ENCODE measurements at regions of chr1 and their contacts with region 1.

Region 1: GRCh38 chr1:21255278-21255942 is 34.9 kb downstream of the ECE1 start:
- DNase-seq: peak; percentile 50
- H3K4me3 ChIP-seq: no peak overlapping the region
- H3K27ac ChIP-seq: no peak overlapping the region
- H3K27me3 ChIP-seq: no peaks in the 10 kb centered on the region
- CTCF ChIP-seq: peak; percentile 93

Region 2: DNA sequence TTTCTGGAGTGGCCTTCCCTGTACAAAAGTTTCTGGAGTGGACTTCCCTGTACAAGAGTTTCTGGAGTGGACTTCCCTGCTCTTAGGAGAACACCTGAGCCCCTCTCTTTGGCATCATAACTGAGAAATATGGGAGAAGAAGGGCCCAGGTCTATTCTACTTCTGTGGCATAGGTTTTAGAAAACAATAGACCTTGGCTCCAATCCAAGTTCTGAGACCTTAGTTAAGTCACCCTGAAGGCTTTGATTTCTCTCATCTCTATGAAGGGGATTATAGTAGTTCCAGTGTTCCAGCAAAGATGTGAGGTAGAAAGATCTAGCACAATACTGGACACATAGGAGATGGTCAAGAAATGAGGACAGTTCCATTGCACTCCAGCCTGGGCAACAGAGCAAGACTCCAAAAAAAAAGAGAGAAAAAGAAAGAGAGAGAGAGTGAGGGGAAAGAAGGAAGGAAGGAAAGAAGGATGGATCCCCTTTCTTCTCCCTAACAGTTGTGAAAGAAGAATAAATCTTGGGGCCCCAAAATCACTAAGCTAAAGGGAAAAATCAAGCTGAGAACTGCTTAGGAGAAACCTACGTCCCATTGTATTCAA is 65.4 kb before region 1 on chr1:
- CTCF ChIA-PET with region 1: no interaction called
- POLR2A ChIA-PET with region 1: no interaction called
- DNase-seq: no peak
- H3K4me3 ChIP-seq: no peak overlapping the region
- H3K27ac ChIP-seq: no peak overlapping the region
- H3K27me3 ChIP-seq: no peaks in the 10 kb centered on the region
- CTCF ChIP-seq: no peak

Region 3: GRCh38 chr1:21244986-21245687 is 10.3 kb before region 1 on chr1:
- CTCF ChIA-PET with region 1: interaction called, 11 read pairs
- POLR2A ChIA-PET with region 1: no interaction called
- DNase-seq: no peak
- H3K4me3 ChIP-seq: no peak overlapping the region
- H3K27ac ChIP-seq: no peak overlapping the region
- H3K27me3 ChIP-seq: no peaks in the 10 kb centered on the region
- CTCF ChIP-seq: peak; percentile 54

Region 4: GRCh38 chr1:21287905-21288514 is 32.6 kb after region 1 on chr1:
- CTCF ChIA-PET with region 1: interaction called, 21 read pairs
- POLR2A ChIA-PET with region 1: no interaction called
- DNase-seq: no peak
- H3K4me3 ChIP-seq: no peak overlapping the region
- H3K27ac ChIP-seq: no peak overlapping the region
- H3K27me3 ChIP-seq: no peaks in the 10 kb centered on the region
- CTCF ChIP-seq: no peak

Region 5: GRCh38 chr1:21334214-21335087 is 79.0 kb after region 1 on chr1:
- CTCF ChIA-PET with region 1: interaction called, 25 read pairs
- POLR2A ChIA-PET with region 1: interaction called, 3 read pairs
- DNase-seq: no peak
- H3K4me3 ChIP-seq: peak overlapping the region; percentile 56
- H3K27ac ChIP-seq: peak overlapping the region; percentile 79
- H3K27me3 ChIP-seq: no peaks in the 10 kb centered on the region
- CTCF ChIP-seq: peak; percentile 93